Activated CD4-positive, alpha-beta memory T cell treated with anti-CD3 and anti-CD28 coated beads, Interleukin-2, amount 10 ng/mL, durations not matched to agents 7 days and 5 days (primary cell): ENCODE measurements at regions of chr12 and their contacts with region 1.

Region 1: GRCh38 chr12:55647027-55647426 is 10.3 kb downstream of the OR10P1 start:
- DNase-seq: no peak
- H3K4me3 Mint-ChIP-seq: no peak overlapping the region
- H3K27ac Mint-ChIP-seq: peak overlapping the region; percentile 21
- H3K4me1 Mint-ChIP-seq: peaks cover 26% of the 10 kb centered on the region
- H3K27me3 Mint-ChIP-seq: no peaks in the 10 kb centered on the region

Region 2: DNA sequence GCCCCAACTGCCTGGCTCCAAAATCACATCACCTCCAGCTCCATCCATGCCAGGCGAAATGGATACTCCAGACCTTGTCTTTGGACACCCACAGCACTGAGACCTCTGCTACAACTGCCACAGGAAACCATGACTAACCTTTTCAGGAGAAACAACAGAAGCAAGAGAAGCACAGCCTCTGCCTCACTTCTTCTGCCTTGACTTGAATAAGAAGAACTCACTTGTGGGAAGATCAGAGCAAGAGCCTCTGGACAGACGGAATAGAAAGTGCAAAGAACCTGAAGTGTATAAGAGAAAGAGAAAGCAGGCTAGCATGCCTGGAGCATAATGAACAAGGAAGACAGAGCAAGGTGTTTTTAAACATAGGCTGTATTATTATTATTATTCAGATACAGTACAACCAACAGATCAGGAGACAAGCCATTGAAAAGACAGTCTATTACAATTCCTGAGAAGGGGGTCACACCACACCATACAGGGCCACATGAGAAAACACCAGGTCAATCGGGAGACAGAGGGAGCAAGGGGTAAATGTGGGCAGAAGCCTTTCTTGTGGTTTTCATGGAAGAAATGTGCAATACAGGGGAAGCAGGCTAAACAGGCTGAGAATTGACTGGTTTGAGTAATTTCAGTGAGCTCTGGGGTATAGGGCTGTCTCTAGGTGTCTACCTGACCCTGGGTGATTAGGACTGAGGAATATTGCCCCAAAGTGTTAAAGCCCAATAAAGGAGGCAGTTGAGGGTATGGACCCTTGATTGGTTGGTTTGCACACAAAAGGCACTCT is 17.8 kb before region 1 on chr12:
- CTCF ChIA-PET with region 1: interaction called, 21 read pairs
- POLR2A ChIA-PET with region 1: no interaction called
- DNase-seq: no peak
- H3K4me3 Mint-ChIP-seq: no peak overlapping the region
- H3K27ac Mint-ChIP-seq: peak overlapping the region; percentile 5
- H3K4me1 Mint-ChIP-seq: peaks cover 21% of the 10 kb centered on the region
- H3K27me3 Mint-ChIP-seq: peaks cover 4% of the 10 kb centered on the region

Region 3: DNA sequence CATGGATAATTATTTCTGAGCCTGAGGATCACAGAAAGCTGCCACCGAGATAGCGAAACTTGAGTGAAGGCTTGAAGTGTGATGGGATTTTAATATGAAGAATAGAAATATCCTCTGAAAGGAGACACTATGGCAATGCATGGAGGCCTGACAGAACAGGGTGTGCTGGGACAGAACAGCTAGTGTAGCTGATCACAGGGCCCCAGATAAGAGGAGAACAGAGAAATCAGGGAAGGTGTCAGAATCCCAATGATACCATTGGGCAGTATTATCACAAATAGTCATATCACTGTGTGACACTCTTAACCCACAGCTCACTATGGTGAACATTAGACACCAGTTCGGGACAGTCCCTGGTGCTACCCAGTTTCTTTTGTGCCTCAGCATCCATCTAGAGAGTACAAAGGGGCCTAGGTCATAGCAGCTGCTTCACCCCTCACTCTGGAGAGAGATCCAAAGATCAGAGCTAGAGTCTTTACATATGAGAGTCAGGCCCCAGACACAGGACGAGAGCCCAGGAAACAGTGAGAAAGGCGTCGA is 10.8 kb before region 1 on chr12:
- CTCF ChIA-PET with region 1: interaction called, 21 read pairs
- POLR2A ChIA-PET with region 1: no interaction called
- DNase-seq: no peak
- H3K4me3 Mint-ChIP-seq: peak overlapping the region; percentile 18
- H3K27ac Mint-ChIP-seq: no peak overlapping the region
- H3K4me1 Mint-ChIP-seq: peaks cover 25% of the 10 kb centered on the region
- H3K27me3 Mint-ChIP-seq: peaks cover 6% of the 10 kb centered on the region